Activated T-helper 1 cell treated with anti-CD3 and anti-CD28 coated beads, Interleukin-12 subunit alpha, Interleukin-12 subunit beta, Interleukin-2, Interleukin-4 antibody, amounts not matched to agents 30 ng/mL and 10 ng/mL and 1 ng/mL, durations not matched to agents 14 hours and 24 hours and 36 hours (primary cell): ENCODE measurements at regions of chr16 and their contacts with region 1.

Region 1: DNA sequence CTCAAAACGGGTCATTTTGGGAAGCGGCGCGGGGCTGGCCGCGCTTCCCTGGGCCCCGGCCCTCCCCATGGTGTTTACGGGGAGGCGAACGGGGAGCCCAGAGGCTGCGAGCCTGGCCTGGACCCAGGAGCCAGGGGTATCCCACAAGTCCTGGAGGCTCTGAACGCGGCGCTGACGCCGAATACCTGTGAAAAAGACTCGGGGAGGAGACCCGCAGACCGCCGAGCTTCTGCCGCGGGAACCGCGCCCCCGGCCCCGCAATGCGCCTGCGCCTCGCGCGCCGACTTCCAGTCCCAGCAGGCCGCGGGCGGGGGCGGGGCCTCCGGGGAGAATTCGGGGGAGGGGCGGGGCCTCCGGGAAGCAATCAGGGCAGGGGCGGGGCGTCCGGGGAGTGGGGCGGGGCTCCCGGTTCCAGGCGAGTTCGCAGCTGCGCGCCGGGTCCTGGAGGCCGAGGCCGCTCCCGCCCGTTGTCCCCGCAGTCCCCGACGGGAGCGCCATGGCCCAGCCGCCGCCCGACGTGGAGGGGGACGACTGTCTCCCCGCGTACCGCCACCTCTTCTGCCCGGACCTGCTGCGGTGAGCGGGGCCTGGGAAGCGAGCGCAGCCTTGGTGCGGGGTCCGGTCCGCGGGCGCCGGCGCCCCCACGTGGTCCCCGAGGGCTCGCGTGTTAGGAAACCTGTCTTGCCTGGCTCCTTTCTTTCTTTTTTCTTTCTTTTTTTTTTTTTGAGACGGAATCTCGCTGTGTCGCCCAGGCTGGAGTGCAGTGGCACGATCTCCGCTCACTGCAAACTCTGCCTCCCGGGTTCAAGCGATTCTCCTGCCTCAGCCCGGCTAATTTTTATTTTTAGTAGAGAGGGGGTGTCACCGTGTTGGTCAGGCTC is at the start of gene DECR2:
- DNase-seq: peak; percentile 90
- H3K4me3 Mint-ChIP-seq: peak within 1 kb of the TSS; percentile 87
- H3K27ac Mint-ChIP-seq: peak within 1 kb of the TSS; percentile 58
- H3K4me1 Mint-ChIP-seq: peaks cover 11% of the 10 kb centered on the region
- H3K27me3 Mint-ChIP-seq: peaks cover 2% of the 10 kb centered on the region
- total RNA-seq, gene DECR2: 18.0 and 20.1 TPM in 2 replicates

Region 2: DNA sequence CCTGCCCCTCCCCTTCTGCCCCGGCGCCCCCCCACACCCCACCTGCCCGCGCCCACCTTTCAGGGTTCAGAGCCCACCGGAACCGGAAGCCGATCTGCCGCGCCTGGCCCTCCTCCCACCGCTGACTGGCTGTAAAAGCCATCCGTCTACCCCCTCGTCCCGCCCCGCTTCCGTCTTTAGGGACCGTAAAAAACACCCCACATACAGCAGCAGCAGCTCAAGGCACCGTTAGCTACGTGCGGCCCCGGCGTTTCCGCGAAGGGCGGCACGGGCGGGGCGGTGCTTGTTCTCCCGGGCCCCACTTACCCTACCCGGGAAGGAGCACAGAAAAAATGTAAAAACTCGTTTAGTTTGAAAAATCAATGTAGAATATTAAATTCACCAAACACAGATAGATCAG is 31.3 kb before region 1 on chr16 and contains the start of gene MRPL28:
- intact Hi-C with region 1: loop called (anchors 2 kb)
- DNase-seq: peak; percentile 92
- H3K4me3 Mint-ChIP-seq: peak within 1 kb of the TSS; percentile 86
- H3K27ac Mint-ChIP-seq: peak within 1 kb of the TSS; percentile 84
- H3K4me1 Mint-ChIP-seq: peaks cover 4% of the 10 kb centered on the region
- H3K27me3 Mint-ChIP-seq: no peaks in the 10 kb centered on the region
- total RNA-seq, gene MRPL28: 110 and 115 TPM in 2 replicates

Region 3: DNA sequence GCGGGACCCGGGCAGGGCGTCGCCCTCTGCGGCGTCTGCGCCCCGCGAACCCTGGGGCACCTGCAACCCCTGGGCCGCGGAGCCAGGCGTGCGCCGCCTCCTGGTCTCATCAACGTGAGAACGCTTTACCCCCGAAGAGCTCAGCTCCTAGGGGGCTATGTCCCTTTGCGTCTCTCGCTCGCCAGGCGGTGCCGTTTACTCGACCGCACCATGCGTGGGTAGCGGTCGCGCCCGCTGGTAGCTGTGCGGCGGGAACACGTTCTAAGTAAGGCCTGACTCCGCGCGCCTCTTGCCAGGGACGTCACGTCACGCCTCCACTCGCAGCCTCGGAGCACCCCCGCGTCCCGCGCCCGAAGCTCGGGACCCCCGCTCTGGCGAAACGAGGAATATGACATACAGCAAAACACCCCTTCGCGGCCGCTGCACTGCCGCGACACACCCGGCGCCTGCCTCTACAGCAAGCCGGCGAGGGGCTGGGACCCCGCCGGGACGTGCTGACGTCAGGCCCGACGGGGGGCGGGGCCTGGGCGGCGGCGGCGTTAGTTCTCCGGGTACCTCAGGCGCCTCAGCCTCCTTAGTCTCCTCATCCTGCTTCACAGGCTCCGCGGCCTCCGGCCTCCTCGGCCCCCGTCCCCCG is 23.5 kb after region 1 on chr16 and contains the start of gene RAB11FIP3:
- intact Hi-C with region 1: loop called (anchors 1 kb)
- DNase-seq: peak; percentile 83
- H3K4me3 Mint-ChIP-seq: peak within 1 kb of the TSS; percentile 84
- H3K27ac Mint-ChIP-seq: peak within 1 kb of the TSS; percentile 88
- H3K4me1 Mint-ChIP-seq: peaks cover 32% of the 10 kb centered on the region
- H3K27me3 Mint-ChIP-seq: peaks cover 16% of the 10 kb centered on the region
- total RNA-seq, gene RAB11FIP3: 41.4 and 47.5 TPM in 2 replicates

Region 4: GRCh38 chr16:450385-451134 is 48.9 kb after region 1 on chr16:
- intact Hi-C with region 1: no loop called
- DNase-seq: no peak
- H3K4me3 Mint-ChIP-seq: no peak overlapping the region
- H3K27ac Mint-ChIP-seq: no peak overlapping the region
- H3K4me1 Mint-ChIP-seq: no peaks in the 10 kb centered on the region
- H3K27me3 Mint-ChIP-seq: no peaks in the 10 kb centered on the region